CD4-positive, alpha-beta T cell (primary cell): ENCODE measurements at regions of chr4 and their contacts with region 1.

Region 1: GRCh38 chr4:142719854-142720541 is 126.1 kb downstream of the INPP4B start:
- DNase-seq: peak in 4 of 14 experiments; percentile 18 to 68 (median 65)
- ATAC-seq: peak; percentile 73
- H3K4me3 ChIP-seq: no peak overlapping the region
- H3K4me3 Mint-ChIP-seq: peak overlapping the region; percentile 31
- H3K27ac ChIP-seq: no peak overlapping the region
- H3K27ac Mint-ChIP-seq: peak overlapping the region; percentile 71
- H3K4me1 ChIP-seq: peaks cover 8% of the 10 kb centered on the region
- H3K4me1 Mint-ChIP-seq: peaks cover 43% of the 10 kb centered on the region
- H3K27me3 ChIP-seq: no peaks in the 10 kb centered on the region
- H3K27me3 Mint-ChIP-seq: no peaks in the 10 kb centered on the region
- CTCF ChIP-seq: peak; percentile 86

Region 2: DNA sequence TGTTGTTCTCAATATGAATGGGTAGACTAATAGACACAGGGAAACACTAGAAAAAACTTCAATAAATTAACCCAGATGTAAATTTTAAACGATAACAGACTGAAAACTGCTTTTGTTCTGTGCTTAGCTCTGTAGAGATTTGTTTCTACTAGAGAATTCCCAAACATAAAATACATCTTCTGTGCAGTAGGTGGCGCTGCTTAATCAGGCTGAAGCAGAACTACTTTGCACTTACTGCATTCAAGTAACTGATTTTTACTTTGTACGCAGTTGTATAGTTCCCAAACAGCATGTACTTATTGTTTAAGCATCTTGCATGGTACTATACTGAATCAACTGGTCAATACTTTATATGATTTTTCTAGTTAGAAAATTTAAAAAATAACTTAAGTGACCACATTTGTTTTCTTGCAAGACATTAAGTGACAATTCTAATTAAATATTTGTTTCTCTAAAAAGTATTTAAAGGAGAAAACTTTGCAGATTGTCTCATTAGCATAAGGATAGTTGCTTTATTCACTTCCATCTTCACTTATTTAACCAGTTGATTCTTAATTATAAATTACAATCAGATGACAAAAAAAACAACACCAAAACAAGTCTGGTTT is 593.0 kb before region 1 on chr4:
- CTCF ChIA-PET with region 1: no interaction called
- POLR2A ChIA-PET with region 1: interaction called, 4 read pairs
- intact Hi-C with region 1: loop called (anchors 1 to 2 kb)
- DNase-seq: peak; percentile 35 to 83 (median 57)
- ATAC-seq: peak; percentile 80
- H3K4me3 ChIP-seq: no peak overlapping the region
- H3K4me3 Mint-ChIP-seq: no peak overlapping the region
- H3K27ac ChIP-seq: no peak overlapping the region
- H3K27ac Mint-ChIP-seq: peak overlapping the region; percentile 6
- H3K4me1 ChIP-seq: peaks cover 8% of the 10 kb centered on the region
- H3K4me1 Mint-ChIP-seq: peaks cover 33% of the 10 kb centered on the region
- H3K27me3 ChIP-seq: no peaks in the 10 kb centered on the region
- H3K27me3 Mint-ChIP-seq: no peaks in the 10 kb centered on the region
- CTCF ChIP-seq: peak; percentile 85

Region 3: DNA sequence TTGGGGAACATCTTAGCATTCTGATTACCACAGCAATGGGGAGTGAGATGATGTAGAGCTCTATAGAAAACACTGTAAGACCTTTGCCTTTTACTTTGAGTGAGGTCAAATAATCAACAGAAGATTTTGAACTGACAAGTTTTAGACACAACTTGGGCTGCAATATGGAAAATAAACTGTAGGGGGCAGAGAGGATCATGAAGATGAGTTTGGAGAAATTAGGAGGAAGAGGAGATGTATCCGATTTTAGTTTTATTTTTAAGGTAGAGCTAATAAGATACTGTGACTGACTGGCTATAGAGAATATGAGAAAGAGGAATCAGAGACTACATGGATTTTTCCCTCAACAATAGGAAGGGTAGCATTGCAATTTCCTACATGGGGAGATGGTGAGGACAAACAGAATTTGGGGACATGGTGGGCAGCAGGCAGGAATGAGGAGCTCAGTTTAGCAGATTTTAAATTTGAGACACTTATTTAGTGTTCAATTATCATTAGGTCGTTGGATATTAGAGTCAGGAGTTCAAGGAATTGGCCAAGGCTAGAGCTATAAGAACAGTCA is 437.0 kb before region 1 on chr4:
- CTCF ChIA-PET with region 1: interaction called, 5 read pairs
- POLR2A ChIA-PET with region 1: no interaction called
- intact Hi-C with region 1: loop called (anchors 1 to 2 kb)
- DNase-seq: peak in 6 of 14 experiments; percentile 11 to 69 (median 46)
- ATAC-seq: peak; percentile 47
- H3K4me3 ChIP-seq: no peak overlapping the region
- H3K4me3 Mint-ChIP-seq: no peak overlapping the region
- H3K27ac ChIP-seq: no peak overlapping the region
- H3K27ac Mint-ChIP-seq: no peak overlapping the region
- H3K4me1 ChIP-seq: peaks cover 20% of the 10 kb centered on the region
- H3K4me1 Mint-ChIP-seq: peaks cover 28% of the 10 kb centered on the region
- H3K27me3 ChIP-seq: no peaks in the 10 kb centered on the region
- H3K27me3 Mint-ChIP-seq: no peaks in the 10 kb centered on the region
- CTCF ChIP-seq: peak; percentile 82

Region 4: DNA sequence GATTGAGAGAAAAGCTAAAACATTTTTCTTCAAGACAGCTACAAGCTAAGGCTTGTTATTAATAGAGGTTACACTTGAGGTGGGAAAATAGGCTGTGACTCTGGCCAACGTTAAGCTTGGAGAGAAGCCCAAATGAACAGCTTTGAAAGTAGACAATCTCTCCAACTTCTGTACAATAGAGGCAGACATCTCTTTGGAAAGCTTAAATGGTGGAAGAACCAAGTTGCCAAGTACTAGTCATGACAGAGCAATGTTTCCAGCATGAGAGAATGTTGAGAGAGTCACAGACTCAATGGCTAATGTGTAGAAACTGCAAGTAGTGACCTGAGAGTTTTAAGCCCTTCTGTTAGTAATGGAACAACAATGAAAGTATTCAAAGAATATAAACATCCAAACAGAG is 172.0 kb before region 1 on chr4:
- CTCF ChIA-PET with region 1: no interaction called
- POLR2A ChIA-PET with region 1: no interaction called
- intact Hi-C with region 1: no loop called
- DNase-seq: no peak
- ATAC-seq: no peak
- H3K4me3 ChIP-seq: no peak overlapping the region
- H3K4me3 Mint-ChIP-seq: no peak overlapping the region
- H3K27ac ChIP-seq: no peak overlapping the region
- H3K27ac Mint-ChIP-seq: no peak overlapping the region
- H3K4me1 ChIP-seq: peaks cover 14% of the 10 kb centered on the region
- H3K4me1 Mint-ChIP-seq: peaks cover 53% of the 10 kb centered on the region
- H3K27me3 ChIP-seq: no peaks in the 10 kb centered on the region
- H3K27me3 Mint-ChIP-seq: no peaks in the 10 kb centered on the region
- CTCF ChIP-seq: no peak

Region 5: GRCh38 chr4:142558851-142559250 is 161.1 kb before region 1 on chr4:
- CTCF ChIA-PET with region 1: no interaction called
- POLR2A ChIA-PET with region 1: no interaction called
- intact Hi-C with region 1: loop called in 1 of 2 experiments (anchors 5 kb)
- DNase-seq: no peak
- ATAC-seq: no peak
- H3K4me3 ChIP-seq: no peak overlapping the region
- H3K4me3 Mint-ChIP-seq: no peak overlapping the region
- H3K27ac ChIP-seq: no peak overlapping the region
- H3K27ac Mint-ChIP-seq: no peak overlapping the region
- H3K4me1 ChIP-seq: peaks cover 26% of the 10 kb centered on the region
- H3K4me1 Mint-ChIP-seq: peaks cover 77% of the 10 kb centered on the region
- H3K27me3 ChIP-seq: no peaks in the 10 kb centered on the region
- H3K27me3 Mint-ChIP-seq: no peaks in the 10 kb centered on the region
- CTCF ChIP-seq: no peak

Region 6: GRCh38 chr4:142579443-142579842 is 140.6 kb before region 1 on chr4:
- CTCF ChIA-PET with region 1: no interaction called
- POLR2A ChIA-PET with region 1: interaction called, 4 read pairs
- intact Hi-C with region 1: loop called in 1 of 2 experiments (anchors 5 kb)
- DNase-seq: no peak
- ATAC-seq: no peak
- H3K4me3 ChIP-seq: no peak overlapping the region
- H3K4me3 Mint-ChIP-seq: no peak overlapping the region
- H3K27ac ChIP-seq: no peak overlapping the region
- H3K27ac Mint-ChIP-seq: no peak overlapping the region
- H3K4me1 ChIP-seq: no peaks in the 10 kb centered on the region
- H3K4me1 Mint-ChIP-seq: peaks cover 72% of the 10 kb centered on the region
- H3K27me3 ChIP-seq: no peaks in the 10 kb centered on the region
- H3K27me3 Mint-ChIP-seq: no peaks in the 10 kb centered on the region
- CTCF ChIP-seq: no peak

Region 7: DNA sequence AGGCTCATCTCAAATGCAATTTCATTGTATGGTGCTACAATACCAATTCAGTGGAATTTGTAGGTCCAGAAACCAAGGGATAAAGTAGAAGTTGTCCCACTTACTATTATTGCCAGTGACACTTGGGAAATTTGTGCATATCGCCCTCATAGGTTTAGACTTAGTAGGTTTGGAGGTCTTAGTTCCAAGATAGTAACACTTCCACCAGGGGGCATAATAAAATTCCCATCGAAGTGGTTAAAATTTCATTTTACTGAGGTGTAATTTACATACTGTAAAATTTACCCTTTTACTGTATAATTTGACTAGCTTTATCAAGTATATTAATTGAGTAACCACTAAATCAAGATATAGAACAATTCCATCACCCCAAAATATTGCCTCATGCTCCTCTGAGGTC is 48.5 kb before region 1 on chr4:
- CTCF ChIA-PET with region 1: interaction called, 4 read pairs
- POLR2A ChIA-PET with region 1: no interaction called
- intact Hi-C with region 1: loop called in 1 of 2 experiments (anchors 5 kb)
- DNase-seq: no peak
- ATAC-seq: no peak
- H3K4me3 ChIP-seq: no peak overlapping the region
- H3K4me3 Mint-ChIP-seq: no peak overlapping the region
- H3K27ac ChIP-seq: no peak overlapping the region
- H3K27ac Mint-ChIP-seq: no peak overlapping the region
- H3K4me1 ChIP-seq: no peaks in the 10 kb centered on the region
- H3K4me1 Mint-ChIP-seq: peaks cover 10% of the 10 kb centered on the region
- H3K27me3 ChIP-seq: no peaks in the 10 kb centered on the region
- H3K27me3 Mint-ChIP-seq: no peaks in the 10 kb centered on the region
- CTCF ChIP-seq: peak; percentile 33

Region 8: DNA sequence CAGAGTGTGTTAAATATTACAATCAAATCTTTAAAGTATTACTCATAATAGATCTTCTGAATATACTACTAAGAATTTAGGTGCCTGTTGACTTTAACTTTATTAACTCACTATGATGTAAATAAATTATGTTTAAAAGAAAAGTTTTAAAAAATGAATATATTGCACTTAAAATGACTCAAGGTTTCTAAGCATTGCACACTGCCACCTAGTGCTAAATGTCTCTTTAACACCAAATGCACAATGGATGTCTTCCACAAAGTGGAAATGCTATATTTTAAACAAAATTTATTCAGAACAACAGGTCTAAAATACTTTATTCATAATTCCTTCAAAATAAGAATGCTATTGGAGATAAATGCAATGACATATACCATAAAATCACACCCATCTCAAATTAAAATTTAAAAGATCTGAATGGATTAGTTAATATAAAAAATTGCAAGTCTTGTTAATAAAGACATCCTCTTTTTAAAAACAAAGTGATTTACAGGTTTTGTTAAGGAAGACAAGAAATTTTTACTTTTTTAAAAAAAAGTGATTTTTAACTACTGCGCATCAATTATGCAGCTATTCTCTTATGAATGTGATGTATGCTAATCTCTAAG is 120.6 kb after region 1 on chr4:
- CTCF ChIA-PET with region 1: no interaction called
- POLR2A ChIA-PET with region 1: no interaction called
- intact Hi-C with region 1: loop called (anchors 5 to 10 kb)
- DNase-seq: peak in 4 of 14 experiments; percentile 16 to 68 (median 56)
- ATAC-seq: no peak
- H3K4me3 ChIP-seq: no peak overlapping the region
- H3K4me3 Mint-ChIP-seq: no peak overlapping the region
- H3K27ac ChIP-seq: no peak overlapping the region
- H3K27ac Mint-ChIP-seq: no peak overlapping the region
- H3K4me1 ChIP-seq: peaks cover 6% of the 10 kb centered on the region
- H3K4me1 Mint-ChIP-seq: peaks cover 14% of the 10 kb centered on the region
- H3K27me3 ChIP-seq: peaks cover 0 to 6% of the 10 kb centered on the region in 2 experiments
- H3K27me3 Mint-ChIP-seq: peaks cover 6% of the 10 kb centered on the region
- CTCF ChIP-seq: peak; percentile 73